ENCODE measurements at regions of chr1 and their contacts with region 1.

Region 1: DNA sequence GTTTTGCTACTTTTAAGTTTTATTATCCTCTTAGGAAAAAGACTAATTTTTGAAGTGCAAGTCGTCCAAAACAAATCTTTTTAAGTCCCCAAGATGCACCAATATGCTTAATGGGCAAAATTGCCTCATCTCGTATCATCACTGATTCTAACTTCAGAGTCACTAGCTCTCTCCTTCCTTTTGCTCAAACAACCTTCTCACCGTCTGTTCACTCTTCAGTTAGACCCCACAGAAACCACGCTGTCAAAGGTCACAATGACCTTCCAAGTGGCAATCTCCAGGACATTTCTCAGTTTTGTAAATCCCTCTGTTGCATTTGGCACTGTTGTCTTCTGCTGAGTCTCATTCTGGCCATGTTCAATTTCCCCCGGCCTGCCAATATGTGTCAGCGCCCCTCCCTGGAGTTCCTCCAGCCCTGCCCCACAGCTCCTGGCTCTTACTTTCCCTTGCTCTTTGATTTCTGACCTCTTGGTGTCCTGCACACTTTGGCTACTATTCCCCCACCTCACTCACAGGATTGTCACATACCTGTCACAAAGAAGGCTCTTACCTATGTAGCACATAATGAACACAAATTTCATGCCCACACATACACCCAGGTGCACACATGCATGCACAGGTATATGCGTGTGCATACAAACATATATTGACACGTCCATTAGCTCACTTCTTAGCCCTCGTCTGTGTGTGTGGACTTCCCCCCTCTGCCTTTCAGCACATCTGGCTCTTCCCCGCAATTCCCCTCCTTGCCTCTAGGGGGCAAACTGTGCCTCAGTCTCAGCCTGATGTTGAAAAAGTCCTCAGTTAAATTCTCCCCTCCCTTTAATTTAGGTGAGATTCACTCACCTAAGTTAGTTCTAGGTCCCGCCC is 354.0 kb upstream of the DUSP10 start:
- DNase-seq: peak; percentile 40
- ATAC-seq: peak; percentile 56

Region 2: DNA sequence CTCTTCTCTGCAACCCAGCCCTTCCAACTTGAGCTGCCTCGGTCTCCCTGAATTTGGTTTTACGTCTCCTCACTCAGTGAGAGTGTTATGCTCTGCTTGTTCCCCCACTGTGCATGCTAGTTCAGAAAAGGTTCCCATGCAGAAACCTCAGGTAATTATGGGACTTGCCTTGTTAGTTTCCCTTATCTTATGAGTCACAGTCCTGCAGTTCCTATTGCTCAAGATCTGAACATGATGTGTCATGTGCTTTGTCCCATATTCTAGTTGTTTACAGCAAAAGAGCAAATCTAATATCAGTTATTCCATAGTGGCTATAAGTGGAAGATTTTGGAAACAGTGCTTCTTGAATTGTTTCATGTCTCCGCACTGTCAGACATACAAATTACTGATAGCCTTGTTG is 428.3 kb before region 1 on chr1:
- intact Hi-C with region 1: no loop called
- DNase-seq: no peak
- ATAC-seq: no peak

Region 3: GRCh38 chr1:222455188-222455879 is 359.5 kb after region 1 on chr1:
- intact Hi-C with region 1: loop called (anchors 10 kb)
- DNase-seq: peak; percentile 89
- ATAC-seq: peak; percentile 98

Measured in Right ventricle myocardium superior (tissue), 1 donor.